ENCODE measurements at regions of chr17 and their contacts with region 1.

Region 1: GRCh38 chr17:56779898-56780733 is 53.6 kb downstream of the C17orf67 start:
- DNase-seq: peak; percentile 88
- H3K4me3 Mint-ChIP-seq: peak overlapping the region; percentile 89
- H3K27ac Mint-ChIP-seq: peak overlapping the region; percentile 92
- H3K4me1 Mint-ChIP-seq: peaks cover 27% of the 10 kb centered on the region
- H3K27me3 Mint-ChIP-seq: no peaks in the 10 kb centered on the region

Region 2: GRCh38 chr17:56679115-56679766 is 100.9 kb before region 1 on chr17:
- intact Hi-C with region 1: loop called (anchors 2 kb)
- DNase-seq: no peak
- H3K4me3 Mint-ChIP-seq: no peak overlapping the region
- H3K27ac Mint-ChIP-seq: no peak overlapping the region
- H3K4me1 Mint-ChIP-seq: peaks cover 17% of the 10 kb centered on the region
- H3K27me3 Mint-ChIP-seq: peaks cover 45% of the 10 kb centered on the region

Region 3: GRCh38 chr17:56715613-56716357 is 64.3 kb before region 1 on chr17:
- intact Hi-C with region 1: loop called (anchors 1 kb)
- DNase-seq: peak; percentile 54
- H3K4me3 Mint-ChIP-seq: no peak overlapping the region
- H3K27ac Mint-ChIP-seq: no peak overlapping the region
- H3K4me1 Mint-ChIP-seq: peaks cover 4% of the 10 kb centered on the region
- H3K27me3 Mint-ChIP-seq: peaks cover 14% of the 10 kb centered on the region

Region 4: DNA sequence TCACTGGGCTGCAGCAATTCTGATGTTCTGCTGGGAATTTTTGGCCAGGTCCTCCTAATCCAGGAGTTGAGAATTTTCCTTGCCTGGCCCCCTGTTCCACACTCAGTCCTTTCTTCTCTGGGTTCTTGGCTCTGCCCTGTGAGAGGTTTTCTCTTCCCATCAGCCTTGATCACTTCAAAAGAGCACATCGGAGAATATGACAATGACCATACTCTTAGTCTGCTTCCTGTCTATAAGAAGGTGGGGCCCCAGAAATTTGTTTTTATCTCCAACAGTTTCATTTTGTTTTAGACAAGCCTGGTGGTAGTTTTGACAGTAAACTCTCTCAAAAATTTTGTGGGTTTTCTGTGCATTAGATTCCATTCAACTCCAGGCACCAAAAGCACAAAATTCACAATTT is 17.1 kb before region 1 on chr17:
- intact Hi-C with region 1: loop called (anchors 2 kb)
- DNase-seq: no peak
- H3K4me3 Mint-ChIP-seq: no peak overlapping the region
- H3K27ac Mint-ChIP-seq: peak overlapping the region; percentile 17
- H3K4me1 Mint-ChIP-seq: peaks cover 9% of the 10 kb centered on the region
- H3K27me3 Mint-ChIP-seq: peaks cover 1% of the 10 kb centered on the region

Region 5: DNA sequence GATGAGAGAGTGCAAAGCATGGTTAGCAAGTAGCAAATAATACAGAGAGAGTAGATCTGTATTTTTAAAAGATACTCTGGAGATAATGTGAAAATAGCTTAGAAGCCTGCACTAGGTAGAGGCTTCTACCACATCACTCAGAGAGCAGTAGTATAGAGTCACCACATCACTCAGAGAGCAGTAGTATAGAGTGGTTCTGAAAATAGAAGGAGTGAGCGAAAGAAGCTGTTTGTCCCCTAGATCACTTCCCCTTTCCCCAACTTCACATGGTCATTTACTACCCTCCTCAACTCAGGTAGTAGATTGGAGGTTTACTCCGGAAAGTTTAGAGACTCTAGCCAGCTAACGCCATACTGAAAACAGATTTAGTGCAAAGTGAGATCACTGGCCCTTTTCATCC is 70.9 kb after region 1 on chr17:
- intact Hi-C with region 1: no loop called
- DNase-seq: no peak
- H3K4me3 Mint-ChIP-seq: no peak overlapping the region
- H3K27ac Mint-ChIP-seq: no peak overlapping the region
- H3K4me1 Mint-ChIP-seq: no peaks in the 10 kb centered on the region
- H3K27me3 Mint-ChIP-seq: no peaks in the 10 kb centered on the region

Region 6: DNA sequence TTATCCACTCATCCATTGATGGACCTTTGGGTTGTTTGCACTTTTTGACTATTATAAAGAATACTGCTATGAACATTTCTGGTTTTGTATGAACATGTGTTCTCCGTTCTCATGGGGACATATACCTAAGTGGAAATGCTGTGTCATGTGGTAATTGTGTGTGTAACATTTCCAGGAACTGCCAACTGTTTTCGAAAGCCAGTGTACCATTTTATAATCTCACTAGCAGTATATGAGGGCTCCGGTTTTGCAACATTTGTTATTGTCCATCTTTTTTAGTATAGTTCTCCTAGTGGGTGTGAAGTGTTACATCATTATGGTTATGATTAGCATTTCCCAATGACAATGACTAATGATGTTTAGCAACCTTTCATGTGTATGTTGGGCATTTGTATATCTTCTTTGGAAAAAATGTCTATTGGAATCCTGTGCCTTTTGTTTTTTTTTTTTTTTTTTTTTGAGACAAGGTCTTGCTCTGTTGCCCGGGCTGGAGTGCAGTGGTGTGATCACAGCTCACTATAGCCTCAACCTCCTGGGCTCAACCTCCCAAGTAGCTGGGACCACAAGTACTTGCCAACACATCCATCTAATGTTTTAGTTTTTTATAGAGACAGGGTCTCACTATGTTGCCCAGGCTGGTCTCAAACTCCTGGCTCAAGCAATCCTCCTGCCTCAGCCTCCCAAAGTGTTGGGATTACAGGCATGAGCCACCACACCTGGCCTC is 139.0 kb after region 1 on chr17:
- intact Hi-C with region 1: no loop called
- DNase-seq: no peak
- H3K4me3 Mint-ChIP-seq: no peak overlapping the region
- H3K27ac Mint-ChIP-seq: peak overlapping the region; percentile 50
- H3K4me1 Mint-ChIP-seq: peaks cover 42% of the 10 kb centered on the region
- H3K27me3 Mint-ChIP-seq: no peaks in the 10 kb centered on the region